Activated CD8-positive, alpha-beta T cell treated with anti-CD3 and anti-CD28 coated beads, Interleukin-2, amount 10 ng/mL, durations not matched to agents 7 days and 5 days (primary cell): ENCODE measurements at regions of chr12 and their contacts with region 1.

Region 1: GRCh38 chr12:49945394-49946080 is 5.0 kb upstream of the AQP2 start:
- DNase-seq: peak; percentile 88
- ATAC-seq: peak; percentile 99
- H3K4me3 Mint-ChIP-seq: peak overlapping the region; percentile 70
- H3K27ac Mint-ChIP-seq: peak overlapping the region; percentile 92
- H3K4me1 Mint-ChIP-seq: peaks cover 24% of the 10 kb centered on the region
- H3K27me3 Mint-ChIP-seq: no peaks in the 10 kb centered on the region

Region 2: DNA sequence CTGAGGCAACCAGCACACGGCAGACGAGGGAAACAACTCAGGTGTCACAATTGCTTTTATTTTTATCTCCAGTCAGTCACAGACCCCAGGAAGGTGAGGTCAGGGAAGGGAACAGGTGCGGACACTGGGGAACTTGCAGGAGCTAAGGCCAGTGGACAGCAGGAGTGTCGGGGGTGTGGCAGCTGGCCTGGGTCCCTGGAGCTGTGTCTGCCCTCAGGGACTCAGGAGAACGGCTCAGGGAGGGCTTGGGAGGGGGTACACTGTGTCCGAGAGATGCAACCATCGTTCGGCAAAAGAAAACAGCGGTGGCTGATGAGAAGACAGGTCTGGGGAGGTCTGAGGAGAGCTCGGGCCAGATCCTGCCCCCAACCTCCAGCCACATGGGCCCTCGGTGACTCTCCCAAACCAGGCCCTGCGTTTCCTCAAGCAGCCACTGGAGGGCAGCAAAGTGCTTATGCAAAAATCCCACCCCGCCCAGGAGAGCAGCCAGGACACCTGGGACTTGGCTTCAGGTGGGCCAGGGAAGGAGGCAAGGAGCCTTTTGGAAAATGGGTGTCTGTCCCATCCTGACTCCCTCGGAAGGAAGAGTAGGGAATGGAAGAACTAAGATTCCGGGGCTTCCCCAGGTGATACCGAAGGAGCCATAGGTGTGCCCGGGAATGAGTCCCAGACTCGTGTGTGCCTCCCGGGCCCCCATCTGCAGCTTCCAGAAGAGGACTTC is 78.5 kb before region 1 on chr12:
- CTCF ChIA-PET with region 1: interaction called, 63 read pairs
- POLR2A ChIA-PET with region 1: no interaction called
- DNase-seq: peak; percentile 80
- ATAC-seq: peak; percentile 78
- H3K4me3 Mint-ChIP-seq: no peak overlapping the region
- H3K27ac Mint-ChIP-seq: no peak overlapping the region
- H3K4me1 Mint-ChIP-seq: no peaks in the 10 kb centered on the region
- H3K27me3 Mint-ChIP-seq: peaks cover 7% of the 10 kb centered on the region

Region 3: DNA sequence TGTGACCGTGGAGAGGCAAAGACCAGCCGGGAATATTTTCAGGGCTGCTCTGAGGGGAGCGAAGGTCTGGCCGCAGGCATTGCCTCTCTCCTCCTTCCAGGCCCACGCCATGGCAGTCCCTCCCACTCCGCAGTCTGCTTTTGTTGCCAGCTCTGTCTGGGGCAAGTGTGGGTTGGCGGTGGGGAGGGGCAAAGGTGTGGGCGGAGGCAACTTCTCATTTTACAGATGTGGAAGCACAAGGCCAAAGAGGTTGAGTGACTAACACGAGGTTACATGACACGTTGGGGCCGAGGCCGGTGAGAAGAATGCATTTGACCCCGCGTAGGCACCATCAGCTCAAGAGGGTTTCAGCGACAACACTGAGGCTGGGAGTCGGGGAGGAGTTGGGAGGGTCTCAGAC is 35.7 kb before region 1 on chr12:
- CTCF ChIA-PET with region 1: interaction called, 19 read pairs
- POLR2A ChIA-PET with region 1: no interaction called
- DNase-seq: no peak
- ATAC-seq: no peak
- H3K4me3 Mint-ChIP-seq: no peak overlapping the region
- H3K27ac Mint-ChIP-seq: no peak overlapping the region
- H3K4me1 Mint-ChIP-seq: peaks cover under 1% of the 10 kb centered on the region
- H3K27me3 Mint-ChIP-seq: peaks cover 3% of the 10 kb centered on the region

Region 4: GRCh38 chr12:49930515-49931288 is 14.8 kb before region 1 on chr12:
- CTCF ChIA-PET with region 1: interaction called, 32 read pairs
- POLR2A ChIA-PET with region 1: no interaction called
- DNase-seq: no peak
- ATAC-seq: no peak
- H3K4me3 Mint-ChIP-seq: no peak overlapping the region
- H3K27ac Mint-ChIP-seq: no peak overlapping the region
- H3K4me1 Mint-ChIP-seq: no peaks in the 10 kb centered on the region
- H3K27me3 Mint-ChIP-seq: peaks cover 17% of the 10 kb centered on the region

Region 5: DNA sequence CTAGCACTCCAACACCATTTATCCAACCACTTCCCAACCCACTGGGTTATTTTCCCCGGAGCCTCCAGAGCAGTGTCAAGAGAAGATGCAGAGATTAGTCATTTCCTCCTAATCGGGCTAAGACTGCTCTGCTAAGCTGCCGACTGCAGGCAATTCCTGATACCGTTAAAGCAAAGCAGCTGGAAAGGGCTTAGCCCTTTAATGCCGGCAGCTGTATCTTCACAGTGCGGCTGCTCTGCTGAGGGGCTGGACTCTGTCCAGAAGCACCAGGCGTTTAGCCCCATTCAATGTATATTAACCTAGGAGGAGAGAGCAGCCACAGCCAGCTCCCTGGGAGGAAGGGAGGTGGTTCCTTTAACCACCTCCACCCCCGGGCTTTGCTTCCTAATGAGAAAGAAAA is 38.4 kb after region 1 on chr12:
- CTCF ChIA-PET with region 1: interaction called, 12 read pairs
- POLR2A ChIA-PET with region 1: no interaction called
- DNase-seq: no peak
- ATAC-seq: no peak
- H3K4me3 Mint-ChIP-seq: no peak overlapping the region
- H3K27ac Mint-ChIP-seq: no peak overlapping the region
- H3K4me1 Mint-ChIP-seq: no peaks in the 10 kb centered on the region
- H3K27me3 Mint-ChIP-seq: no peaks in the 10 kb centered on the region

Region 6: GRCh38 chr12:50025187-50026059 is 79.9 kb after region 1 on chr12 and contains the start of gene RACGAP1:
- CTCF ChIA-PET with region 1: interaction called, 11 read pairs
- POLR2A ChIA-PET with region 1: no interaction called
- DNase-seq: peak; percentile 98
- ATAC-seq: peak; percentile 98
- H3K4me3 Mint-ChIP-seq: peak within 1 kb of the TSS; percentile 94
- H3K27ac Mint-ChIP-seq: peak within 1 kb of the TSS; percentile 98
- H3K4me1 Mint-ChIP-seq: peaks cover 39% of the 10 kb centered on the region
- H3K27me3 Mint-ChIP-seq: no peaks in the 10 kb centered on the region
- total RNA-seq, gene RACGAP1: 185 to 200 TPM

Region 7: GRCh38 chr12:50055831-50056638 is 110.5 kb after region 1 on chr12:
- CTCF ChIA-PET with region 1: interaction called, 12 read pairs
- POLR2A ChIA-PET with region 1: no interaction called
- DNase-seq: peak; percentile 72
- ATAC-seq: peak; percentile 20
- H3K4me3 Mint-ChIP-seq: peak overlapping the region; percentile 41
- H3K27ac Mint-ChIP-seq: no peak overlapping the region
- H3K4me1 Mint-ChIP-seq: peaks cover 45% of the 10 kb centered on the region
- H3K27me3 Mint-ChIP-seq: peaks cover 34% of the 10 kb centered on the region

Region 8: DNA sequence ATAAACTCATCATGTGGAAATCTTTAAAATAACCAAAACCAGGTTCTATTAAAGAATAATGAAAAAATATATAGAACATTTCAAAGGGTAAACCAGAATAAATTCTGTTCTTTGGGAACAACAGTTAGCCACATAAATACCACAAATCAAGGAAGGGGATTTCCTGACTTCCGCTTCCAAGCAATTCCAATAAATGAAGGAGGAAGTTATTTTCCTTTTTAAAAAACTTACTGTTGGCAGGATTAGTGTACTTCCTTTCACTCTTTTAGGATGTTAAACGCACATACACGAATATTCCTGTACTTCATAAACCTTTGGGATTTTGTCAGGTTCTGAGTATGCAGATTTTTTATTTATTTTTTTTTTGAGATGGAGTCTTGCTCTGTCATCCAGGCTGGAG is 351.5 kb after region 1 on chr12:
- CTCF ChIA-PET with region 1: no interaction called
- POLR2A ChIA-PET with region 1: no interaction called
- DNase-seq: no peak
- ATAC-seq: no peak
- H3K4me3 Mint-ChIP-seq: no peak overlapping the region
- H3K27ac Mint-ChIP-seq: no peak overlapping the region
- H3K4me1 Mint-ChIP-seq: no peaks in the 10 kb centered on the region
- H3K27me3 Mint-ChIP-seq: no peaks in the 10 kb centered on the region